HAP-1 (cell line): ENCODE measurements at regions of chr4 and their contacts with region 1.

Region 1: GRCh38 chr4:153318696-153319320 is 25.7 kb upstream of the MND1 start:
- DNase-seq: peak; percentile 58 to 72
- H3K4me3 ChIP-seq: no peak overlapping the region
- H3K4me1 ChIP-seq: no peaks in the 10 kb centered on the region
- H3K27me3 ChIP-seq: no peaks in the 10 kb centered on the region

Region 2: GRCh38 chr4:152843481-152844090 is 475.2 kb before region 1 on chr4:
- in situ Hi-C with region 1: loop called (anchors 25 kb)
- DNase-seq: no peak
- H3K4me3 ChIP-seq: no peak overlapping the region
- H3K4me1 ChIP-seq: peaks cover 2% of the 10 kb centered on the region; the same call in 1 of the 2 replicates
- H3K27me3 ChIP-seq: no peaks in the 10 kb centered on the region

Region 3: DNA sequence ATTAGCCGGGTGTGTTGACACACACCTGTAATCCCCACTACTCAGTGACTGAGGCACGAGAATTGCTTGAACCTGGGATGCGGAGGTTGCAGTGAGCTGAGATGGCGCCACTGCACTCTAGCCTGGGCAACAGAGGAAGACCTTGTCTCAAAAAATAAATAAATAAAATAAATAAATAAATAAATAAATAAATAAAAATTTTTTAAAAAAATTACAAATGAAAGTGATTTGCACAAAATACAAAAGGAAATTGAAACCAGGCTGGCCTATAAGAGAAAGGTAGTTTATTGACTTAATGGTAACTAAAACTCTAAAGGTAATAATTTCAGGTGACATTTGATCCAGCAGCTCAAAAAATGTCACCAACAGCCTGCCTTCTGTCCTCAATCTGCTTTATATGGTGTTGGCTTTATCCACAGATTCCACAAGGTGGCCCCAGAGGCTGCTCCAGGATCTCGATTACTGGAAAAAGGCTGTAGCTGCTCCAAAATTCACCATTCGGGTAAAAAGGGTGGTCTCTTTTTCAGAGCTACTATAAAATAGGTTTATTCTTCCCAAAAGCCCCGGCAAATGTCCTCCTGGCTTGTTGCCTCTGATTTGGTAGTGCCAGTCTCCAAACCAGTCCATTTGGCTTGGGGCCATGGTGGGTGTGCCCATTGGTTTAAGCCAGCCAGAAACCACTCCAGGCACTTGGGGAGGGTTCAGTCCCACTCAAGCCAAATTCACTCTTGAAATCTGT is 175.9 kb before region 1 on chr4:
- in situ Hi-C with region 1: loop called (anchors 5 kb)
- DNase-seq: peak; percentile 82 to 86
- H3K4me3 ChIP-seq: no peak overlapping the region
- H3K4me1 ChIP-seq: peaks cover 41% of the 10 kb centered on the region
- H3K27me3 ChIP-seq: no peaks in the 10 kb centered on the region

Region 4: DNA sequence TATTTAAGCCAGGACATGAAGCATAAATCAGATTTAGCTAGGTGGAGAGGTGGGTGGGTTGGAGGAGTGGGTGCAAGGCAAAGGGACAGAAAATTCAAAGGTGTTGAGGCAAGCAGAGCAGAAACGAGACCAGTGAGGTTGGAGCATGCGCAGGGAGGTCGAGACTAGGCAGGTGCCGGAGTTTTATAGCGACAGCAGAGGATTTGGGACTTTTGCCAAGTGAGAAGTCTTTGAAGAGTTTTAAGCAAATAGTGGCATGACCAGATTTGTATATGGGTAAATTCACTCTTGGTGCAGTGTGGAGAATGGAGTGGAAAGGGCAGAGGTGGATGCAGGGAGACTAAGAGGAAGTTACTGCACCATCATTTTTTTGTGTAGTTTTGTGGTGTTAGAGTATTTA is 258.3 kb after region 1 on chr4:
- in situ Hi-C with region 1: no loop called
- DNase-seq: no peak
- H3K4me3 ChIP-seq: no peak overlapping the region
- H3K4me1 ChIP-seq: no peaks in the 10 kb centered on the region
- H3K27me3 ChIP-seq: no peaks in the 10 kb centered on the region